Heart left ventricle (tissue), 16 donors: ENCODE measurements at regions of chr7 and their contacts with region 1.

Region 1: DNA sequence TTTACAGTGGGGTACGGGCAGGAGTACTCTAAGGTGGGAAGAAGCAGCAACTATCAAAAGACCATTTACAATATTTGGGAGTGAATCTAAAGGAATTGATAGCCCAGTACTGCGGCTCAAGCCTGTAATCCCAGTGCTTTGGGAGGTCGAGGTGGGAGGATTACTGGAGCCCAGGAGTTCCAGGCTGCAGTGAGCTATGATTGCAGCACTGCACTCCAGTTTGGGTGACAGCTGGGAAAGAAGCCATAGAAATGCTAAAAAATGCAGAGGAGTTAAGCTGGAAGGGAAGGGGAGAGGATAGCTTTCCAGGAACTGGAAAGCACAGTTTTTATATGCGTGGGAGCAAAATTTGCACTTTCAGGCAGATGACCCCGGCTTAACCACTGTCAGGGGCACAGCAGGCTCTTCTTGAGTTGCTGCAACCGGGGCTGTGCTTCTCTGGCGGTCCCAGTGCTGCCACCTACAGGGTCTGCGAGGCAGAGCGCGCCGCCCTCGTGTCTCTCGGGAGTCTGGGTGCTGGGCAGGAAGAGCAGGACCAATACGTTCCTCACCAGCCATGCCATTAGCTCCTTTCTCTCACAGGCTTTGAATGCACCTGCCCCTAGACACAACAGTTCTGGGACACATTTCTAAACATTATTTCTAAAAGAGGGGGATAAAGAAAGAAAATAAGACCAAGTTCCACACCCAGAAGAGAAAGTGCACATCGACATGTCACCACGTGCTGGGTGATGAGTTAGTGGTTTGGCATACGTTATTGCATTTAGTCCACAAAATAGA is 10.1 kb upstream of the BMPER start:
- DNase-seq: peak; percentile 80 to 89 (median 84)
- ATAC-seq: peak; percentile 82 to 98 (median 94)
- H3K4me3 ChIP-seq: no peak overlapping the region
- H3K27ac ChIP-seq: no peak overlapping the region
- H3K4me1 ChIP-seq: peaks cover 0 to 10% (median 1%) of the 10 kb centered on the region in 12 donors
- H3K27me3 ChIP-seq: peaks cover 0 to 15% (median 0%) of the 10 kb centered on the region in 9 donors
- CTCF ChIP-seq: peak; percentile 83 to 96 (median 90)
- POLR2A ChIP-seq: no peak

Region 2: GRCh38 chr7:33243319-33243881 is 651.8 kb before region 1 on chr7:
- intact Hi-C with region 1: loop called in 3 of 10 experiments (anchors 10 kb)
- DNase-seq: no peak
- ATAC-seq: peak in 2 of 4 donors; percentile 51 to 64
- H3K4me3 ChIP-seq: no peak overlapping the region
- H3K27ac ChIP-seq: no peak overlapping the region
- H3K4me1 ChIP-seq: peaks cover 0 to 2% (median 0%) of the 10 kb centered on the region in 12 donors
- H3K27me3 ChIP-seq: no peaks in the 10 kb centered on the region
- CTCF ChIP-seq: peak; percentile 31 to 78 (median 70)
- POLR2A ChIP-seq: no peak

Region 3: DNA sequence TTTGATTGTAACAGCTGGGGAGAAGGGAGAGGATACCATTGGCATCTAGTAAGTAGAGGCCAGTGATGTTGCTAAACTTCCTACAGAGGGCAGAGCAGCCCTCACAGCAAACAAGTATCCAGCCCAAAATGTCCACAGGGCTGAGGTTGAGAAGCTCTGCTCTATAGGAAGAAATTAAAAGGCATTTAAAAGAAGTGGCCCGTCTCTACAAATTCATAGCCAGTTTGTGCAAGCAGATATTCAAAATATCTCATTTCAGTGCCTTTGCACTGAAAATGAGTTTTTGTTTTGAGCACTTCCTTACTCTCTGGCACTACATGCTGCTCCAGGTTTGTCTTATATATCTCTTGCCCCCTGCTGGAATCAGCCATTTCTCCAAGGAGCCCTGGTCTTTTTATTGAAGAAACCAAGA is 435.9 kb before region 1 on chr7:
- intact Hi-C with region 1: loop called in 1 of 10 experiments (anchors 5 kb)
- DNase-seq: peak in 1 of 5 donors; percentile 22
- ATAC-seq: peak; percentile 58 to 86 (median 74)
- H3K4me3 ChIP-seq: peak overlapping the region in 1 of 12 donors; percentile 16
- H3K27ac ChIP-seq: no peak overlapping the region
- H3K4me1 ChIP-seq: no peaks in the 10 kb centered on the region
- H3K27me3 ChIP-seq: no peaks in the 10 kb centered on the region
- CTCF ChIP-seq: peak; percentile 23 to 55 (median 44)
- POLR2A ChIP-seq: no peak

Region 4: DNA sequence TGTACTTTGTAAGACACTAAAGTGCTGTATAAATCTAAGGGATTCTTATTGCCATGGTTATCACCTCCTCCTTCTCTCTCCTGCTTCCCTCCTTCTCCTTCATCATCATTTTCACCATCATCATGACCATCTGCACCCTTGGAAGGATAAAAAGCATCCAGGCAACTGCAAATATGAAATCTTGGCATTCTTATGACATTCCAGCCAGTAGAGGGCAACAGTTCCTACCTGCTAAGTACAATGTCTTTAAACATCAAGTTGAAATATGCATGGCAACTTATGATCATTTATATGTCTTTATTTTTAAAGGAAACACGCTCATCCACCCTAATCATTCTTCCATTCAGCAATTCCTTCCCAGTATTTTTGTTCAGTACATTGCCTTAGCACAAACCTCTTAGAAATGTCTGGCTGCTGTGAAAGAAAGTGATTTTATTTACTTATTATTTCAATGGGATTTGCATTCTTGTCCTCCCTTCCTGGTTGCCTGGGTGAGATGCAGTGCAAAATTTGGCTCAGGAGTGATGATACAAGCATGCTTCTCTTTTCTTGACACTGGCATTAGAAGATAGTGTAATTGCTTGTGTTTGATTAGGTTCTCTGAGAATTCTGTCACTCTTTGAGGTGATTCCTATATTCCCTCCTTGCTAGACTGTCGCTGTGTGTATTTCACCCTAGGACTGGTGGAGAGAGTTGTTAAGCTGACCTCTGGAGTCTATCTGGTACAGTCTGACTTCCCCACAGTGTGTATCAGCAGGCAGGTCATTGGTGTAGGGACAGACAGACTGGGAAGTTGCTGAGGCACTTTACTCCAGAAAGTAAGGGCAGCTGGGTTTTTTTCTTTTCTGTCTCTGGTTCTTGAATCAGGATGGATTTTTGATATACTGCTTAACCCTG is 178.4 kb before region 1 on chr7:
- intact Hi-C with region 1: loop called in 1 of 10 experiments (anchors 2 kb)
- DNase-seq: no peak
- ATAC-seq: no peak
- H3K4me3 ChIP-seq: no peak overlapping the region
- H3K27ac ChIP-seq: no peak overlapping the region
- H3K4me1 ChIP-seq: peaks cover 0 to 21% (median 5%) of the 10 kb centered on the region in 12 donors
- H3K27me3 ChIP-seq: no peaks in the 10 kb centered on the region
- CTCF ChIP-seq: peak; percentile 47 to 85 (median 68)
- POLR2A ChIP-seq: no peak

Region 5: GRCh38 chr7:33757562-33758165 is 137.6 kb before region 1 on chr7:
- intact Hi-C with region 1: loop called (anchors 1 to 5 kb)
- DNase-seq: no peak
- ATAC-seq: no peak
- H3K4me3 ChIP-seq: no peak overlapping the region
- H3K27ac ChIP-seq: no peak overlapping the region
- H3K4me1 ChIP-seq: peaks cover 0 to 19% (median 7%) of the 10 kb centered on the region in 12 donors
- H3K27me3 ChIP-seq: no peaks in the 10 kb centered on the region
- CTCF ChIP-seq: peak; percentile 48 to 83 (median 71)
- POLR2A ChIP-seq: no peak

Region 6: DNA sequence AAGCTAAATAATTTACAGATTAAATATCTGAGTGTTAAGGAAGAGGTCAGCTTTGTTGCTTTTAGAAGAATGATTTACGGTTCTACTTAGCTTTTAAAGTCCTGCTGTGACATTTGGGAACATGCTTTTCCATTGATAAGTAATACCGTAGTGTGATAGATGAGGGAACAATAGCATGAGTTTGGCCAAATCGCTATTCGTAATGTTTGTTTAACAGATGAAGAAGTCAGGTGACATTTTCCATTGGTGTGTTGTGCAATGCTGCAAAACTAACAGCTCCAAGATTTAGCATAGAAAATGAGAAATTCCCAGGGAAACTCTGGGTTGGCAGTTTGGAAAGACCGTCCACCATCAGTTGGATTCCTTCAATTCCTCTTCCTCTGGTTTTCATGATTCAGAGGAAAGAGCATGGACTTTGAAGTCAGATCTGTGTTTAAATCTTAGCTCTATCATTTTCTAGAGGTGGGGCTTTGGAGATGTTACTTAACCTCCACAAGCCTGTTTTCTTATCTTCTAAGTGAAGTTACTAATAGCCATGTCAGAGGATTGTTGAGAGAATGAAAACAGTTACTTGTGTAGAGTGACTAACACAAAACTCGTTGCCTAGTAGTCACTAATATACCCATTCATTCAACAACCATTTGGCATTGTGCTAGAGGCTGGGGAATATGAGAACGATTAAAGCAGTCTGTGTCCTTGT is 130.3 kb before region 1 on chr7:
- intact Hi-C with region 1: loop called in 1 of 10 experiments (anchors 5 kb)
- DNase-seq: no peak
- ATAC-seq: peak in 3 of 4 donors; percentile 33 to 58 (median 52)
- H3K4me3 ChIP-seq: no peak overlapping the region
- H3K27ac ChIP-seq: no peak overlapping the region
- H3K4me1 ChIP-seq: peaks cover 0 to 12% (median 0%) of the 10 kb centered on the region in 12 donors
- H3K27me3 ChIP-seq: no peaks in the 10 kb centered on the region
- CTCF ChIP-seq: no peak
- POLR2A ChIP-seq: no peak

Region 7: DNA sequence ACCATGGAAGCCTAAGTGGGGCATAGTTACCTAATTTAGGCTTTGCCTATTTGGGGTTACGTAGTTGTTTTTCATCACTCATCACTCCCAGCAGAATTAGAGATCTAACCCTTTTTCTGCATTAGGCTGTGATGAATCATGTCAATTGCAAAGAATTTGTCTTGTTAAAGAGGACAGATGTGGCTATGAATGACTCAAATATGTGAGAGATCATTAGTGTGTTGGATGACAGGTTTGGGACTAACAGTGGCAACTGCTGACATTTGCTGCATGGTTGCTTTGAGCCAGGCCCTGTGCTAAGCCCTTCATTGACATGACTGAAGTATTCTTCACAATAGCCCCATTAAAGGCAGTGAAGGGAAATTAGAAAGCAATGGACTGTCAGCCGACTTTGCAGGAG is 73.2 kb before region 1 on chr7:
- intact Hi-C with region 1: no loop called
- DNase-seq: no peak
- ATAC-seq: no peak
- H3K4me3 ChIP-seq: no peak overlapping the region
- H3K27ac ChIP-seq: no peak overlapping the region
- H3K4me1 ChIP-seq: peaks cover 0 to 8% (median 0%) of the 10 kb centered on the region in 12 donors
- H3K27me3 ChIP-seq: no peaks in the 10 kb centered on the region
- CTCF ChIP-seq: no peak
- POLR2A ChIP-seq: no peak

Region 8: DNA sequence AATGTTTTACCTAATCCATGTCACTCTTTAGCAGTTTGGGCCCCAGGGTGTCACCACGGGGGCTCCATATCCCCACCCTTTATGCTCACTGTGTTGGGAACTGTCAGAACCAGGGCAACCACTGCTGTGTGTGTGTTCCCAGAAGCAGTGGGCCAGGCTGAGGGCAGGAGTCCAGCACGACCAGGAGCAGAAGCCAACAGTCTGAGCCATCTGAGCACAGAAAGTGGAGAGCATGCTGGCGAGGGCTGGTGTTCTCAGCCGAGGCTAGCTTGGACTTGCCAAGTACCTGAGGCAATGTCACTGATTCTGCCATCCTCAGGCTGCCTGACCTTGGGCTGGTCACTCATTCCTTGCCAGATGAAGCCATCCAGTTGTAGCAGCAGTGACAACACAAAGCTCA is 295.1 kb after region 1 on chr7:
- intact Hi-C with region 1: no loop called
- DNase-seq: peak; percentile 9 to 78 (median 52)
- ATAC-seq: peak; percentile 90 to 94 (median 91)
- H3K4me3 ChIP-seq: no peak overlapping the region
- H3K27ac ChIP-seq: no peak overlapping the region
- H3K4me1 ChIP-seq: no peaks in the 10 kb centered on the region
- H3K27me3 ChIP-seq: no peaks in the 10 kb centered on the region
- CTCF ChIP-seq: no peak
- POLR2A ChIP-seq: no peak